Activated CD4-positive, alpha-beta T cell treated with anti-CD3 and anti-CD28 coated beads for 36 hours (primary cell): ENCODE measurements at regions of chr6 and their contacts with region 1.

Region 1: GRCh38 chr6:111551520-111552231 is 54.0 kb downstream of the TRAF3IP2 start:
- DNase-seq: no peak
- ATAC-seq: no peak
- H3K4me3 Mint-ChIP-seq: no peak overlapping the region
- H3K27ac Mint-ChIP-seq: no peak overlapping the region
- H3K4me1 Mint-ChIP-seq: no peaks in the 10 kb centered on the region
- H3K27me3 Mint-ChIP-seq: no peaks in the 10 kb centered on the region

Region 2: DNA sequence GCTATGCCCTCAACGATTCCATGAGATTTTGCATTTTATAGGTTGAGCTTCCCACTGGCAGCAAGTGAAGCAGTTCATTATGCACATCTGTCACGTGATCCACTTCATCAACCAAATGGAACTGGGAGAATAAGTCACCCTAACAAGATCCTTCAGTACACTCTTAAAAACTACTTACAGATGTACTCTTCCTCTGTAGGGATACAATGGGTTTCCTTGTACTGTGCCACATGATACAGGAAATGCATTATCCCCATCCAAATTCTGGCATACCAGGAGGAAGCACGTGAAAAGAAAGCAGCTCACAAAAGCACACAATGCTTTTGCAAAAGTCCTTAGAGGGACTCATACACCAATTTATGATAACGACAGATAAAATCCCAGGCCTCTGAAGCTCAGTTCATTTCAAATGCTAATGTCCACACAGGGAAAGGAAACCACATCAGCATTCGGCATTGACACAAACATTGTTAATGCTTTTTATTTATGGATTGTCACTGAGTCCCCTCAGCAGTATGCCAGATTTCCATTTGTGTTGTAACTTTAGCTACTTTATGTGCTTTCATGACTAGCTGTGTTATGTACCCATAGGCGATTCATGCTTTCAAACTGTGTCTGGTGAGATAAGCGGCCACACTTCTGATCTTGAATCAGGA is 10.5 kb before region 1 on chr6:
- CTCF ChIA-PET with region 1: interaction called, 16 read pairs
- POLR2A ChIA-PET with region 1: no interaction called
- intact Hi-C with region 1: no loop called
- DNase-seq: no peak
- ATAC-seq: no peak
- H3K4me3 Mint-ChIP-seq: no peak overlapping the region
- H3K27ac Mint-ChIP-seq: no peak overlapping the region
- H3K4me1 Mint-ChIP-seq: peaks cover 9% of the 10 kb centered on the region
- H3K27me3 Mint-ChIP-seq: no peaks in the 10 kb centered on the region

Region 3: DNA sequence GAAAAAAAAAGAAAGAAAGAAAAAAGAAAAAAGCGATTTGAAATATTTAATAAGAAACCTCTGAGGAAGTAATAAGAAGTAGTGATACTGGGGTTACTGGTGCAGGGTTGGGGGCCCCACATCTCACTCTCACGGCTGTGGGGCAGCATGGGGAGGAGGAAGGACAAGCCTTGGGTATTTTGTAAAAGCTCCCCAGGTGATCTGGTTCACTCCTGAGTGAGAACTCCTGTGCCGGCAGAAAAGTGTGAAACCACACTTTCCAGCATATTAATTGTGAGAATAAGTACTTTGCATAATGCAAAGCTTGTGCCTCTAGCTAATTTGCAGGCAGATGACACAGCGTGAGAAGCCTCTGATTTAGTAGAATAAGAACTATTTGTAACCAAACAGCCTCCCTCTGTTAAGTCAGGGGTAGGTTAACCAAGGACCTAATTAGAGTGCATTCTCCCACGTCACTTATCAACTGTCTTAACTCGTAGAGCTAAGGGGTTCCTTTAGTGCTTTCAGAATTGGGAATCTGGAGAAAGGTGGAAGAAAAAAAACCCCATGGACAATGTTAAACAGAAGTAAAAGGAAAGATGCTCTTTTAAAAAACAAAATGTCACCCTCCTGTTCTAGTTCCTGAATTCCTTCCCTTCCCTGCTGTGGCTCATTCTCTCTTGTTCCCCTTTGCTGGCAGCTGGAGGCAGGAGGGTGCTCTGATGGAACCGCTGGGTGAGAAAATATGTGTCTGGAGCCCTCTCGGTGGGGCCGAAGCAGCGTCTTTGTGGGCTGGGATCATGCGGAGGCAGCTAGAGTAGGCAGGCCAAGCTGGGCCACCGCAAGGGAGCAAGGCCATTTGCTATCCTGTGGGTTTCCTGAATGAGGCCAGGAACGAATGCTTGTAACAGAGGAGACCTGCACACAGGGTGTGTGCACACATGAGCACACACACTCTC is 212.8 kb after region 1 on chr6:
- CTCF ChIA-PET with region 1: no interaction called
- POLR2A ChIA-PET with region 1: no interaction called
- intact Hi-C with region 1: no loop called
- DNase-seq: peak; percentile 77
- ATAC-seq: peak; percentile 53
- H3K4me3 Mint-ChIP-seq: peak overlapping the region; percentile 68
- H3K27ac Mint-ChIP-seq: peak overlapping the region; percentile 99
- H3K4me1 Mint-ChIP-seq: peaks cover 99% of the 10 kb centered on the region
- H3K27me3 Mint-ChIP-seq: no peaks in the 10 kb centered on the region

Region 4: GRCh38 chr6:111777357-111777756 is 225.7 kb after region 1 on chr6:
- CTCF ChIA-PET with region 1: no interaction called
- POLR2A ChIA-PET with region 1: no interaction called
- intact Hi-C with region 1: no loop called
- DNase-seq: no peak
- ATAC-seq: peak; percentile 18
- H3K4me3 Mint-ChIP-seq: no peak overlapping the region
- H3K27ac Mint-ChIP-seq: peak overlapping the region; percentile 92
- H3K4me1 Mint-ChIP-seq: peaks cover 90% of the 10 kb centered on the region
- H3K27me3 Mint-ChIP-seq: no peaks in the 10 kb centered on the region